ENCODE measurements at regions of chrX and their contacts with region 1.

Region 1: GRCh38 chrX:53714580-53715345 is 28.2 kb upstream of the HUWE1 start:
- DNase-seq: peak; percentile 89
- ATAC-seq: peak; percentile 75
- H3K4me3 ChIP-seq: peak overlapping the region; percentile 60
- H3K27ac ChIP-seq: peak overlapping the region; percentile 84
- H3K4me1 ChIP-seq: peaks cover 19% of the 10 kb centered on the region
- H3K27me3 ChIP-seq: no peaks in the 10 kb centered on the region
- CTCF ChIP-seq: peak; percentile 10 to 17 (median 16); a peak in 2 of 6 replicates
- EP300 ChIP-seq: no peak; a peak in 1 of 4 replicates
- POLR2A ChIP-seq: 0 out of 2 replicates have a peak, but pooled peaks have one; percentile 56
- RAD21 ChIP-seq: no peak

Region 2: GRCh38 chrX:53678667-53679066 is 36.1 kb before region 1 on chrX:
- CTCF ChIA-PET with region 1: interaction called, 13 read pairs
- POLR2A ChIA-PET with region 1: interaction called, 133 read pairs
- RAD21 ChIA-PET with region 1: interaction called, 38 read pairs
- SMC1A ChIA-PET with region 1: interaction called, 75 read pairs
- in situ Hi-C with region 1: no loop called
- intact Hi-C with region 1: no loop called
- DNase-seq: no peak
- ATAC-seq: peak; percentile 28; the same call in 1 of the 3 replicates
- H3K4me3 ChIP-seq: no peak overlapping the region
- H3K27ac ChIP-seq: no peak overlapping the region
- H3K4me1 ChIP-seq: no peaks in the 10 kb centered on the region
- H3K27me3 ChIP-seq: no peaks in the 10 kb centered on the region
- CTCF ChIP-seq: peak; percentile 33 to 41 (median 38); a peak in 5 of 6 replicates
- EP300 ChIP-seq: no peak
- POLR2A ChIP-seq: no peak
- RAD21 ChIP-seq: peak; percentile 36; the same call in 1 of the 2 replicates

Region 3: GRCh38 chrX:53683556-53684414 is 31.0 kb before region 1 on chrX:
- CTCF ChIA-PET with region 1: interaction called, 13 read pairs
- POLR2A ChIA-PET with region 1: interaction called, 133 read pairs
- RAD21 ChIA-PET with region 1: interaction called, 51 read pairs
- SMC1A ChIA-PET with region 1: interaction called, 75 read pairs
- in situ Hi-C with region 1: no loop called
- intact Hi-C with region 1: loop called (anchors 1 kb)
- DNase-seq: peak; percentile 95
- ATAC-seq: peak; percentile 72
- H3K4me3 ChIP-seq: peak overlapping the region; percentile 67
- H3K27ac ChIP-seq: peak overlapping the region; percentile 82
- H3K4me1 ChIP-seq: no peaks in the 10 kb centered on the region
- H3K27me3 ChIP-seq: no peaks in the 10 kb centered on the region
- CTCF ChIP-seq: peak in 1 of 3 experiments; percentile 47; a peak in 1 of 6 replicates
- EP300 ChIP-seq: no peak
- POLR2A ChIP-seq: peak; percentile 81
- RAD21 ChIP-seq: no peak

Region 4: DNA sequence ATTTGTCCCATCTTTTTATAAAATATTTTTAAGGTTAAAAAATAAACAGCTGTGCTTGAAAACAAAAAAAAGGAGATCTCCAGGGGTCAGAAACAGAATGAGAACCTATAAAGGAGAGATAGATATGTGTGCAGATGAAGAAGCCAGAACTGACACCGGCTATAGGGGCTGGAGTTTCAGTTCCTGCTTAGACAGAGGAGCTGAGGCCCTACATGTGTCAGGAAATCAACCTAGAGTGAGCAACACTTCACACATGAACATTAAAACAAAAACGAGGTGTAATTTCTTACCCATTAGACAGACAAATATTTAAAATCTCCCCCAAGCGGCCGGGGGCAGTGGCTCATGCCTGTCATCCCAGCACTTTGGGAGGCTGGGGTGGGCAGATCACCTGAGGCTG is 10.5 kb before region 1 on chrX:
- CTCF ChIA-PET with region 1: interaction called, 41 read pairs
- POLR2A ChIA-PET with region 1: interaction called, 9 read pairs
- RAD21 ChIA-PET with region 1: interaction called, 20 read pairs
- SMC1A ChIA-PET with region 1: interaction called, 63 read pairs
- in situ Hi-C with region 1: no loop called
- intact Hi-C with region 1: no loop called
- DNase-seq: no peak
- ATAC-seq: peak; percentile 99
- H3K4me3 ChIP-seq: no peak overlapping the region
- H3K27ac ChIP-seq: peak overlapping the region; percentile 40
- H3K4me1 ChIP-seq: no peaks in the 10 kb centered on the region; the same call in 1 of the 2 replicates
- H3K27me3 ChIP-seq: no peaks in the 10 kb centered on the region
- CTCF ChIP-seq: no peak
- EP300 ChIP-seq: peak in 1 of 2 experiments; percentile 60; a peak in 1 of 4 replicates
- POLR2A ChIP-seq: no peak
- RAD21 ChIP-seq: no peak

Region 5: GRCh38 chrX:53732797-53733196 is 18.0 kb after region 1 on chrX:
- CTCF ChIA-PET with region 1: interaction called, 5 read pairs
- POLR2A ChIA-PET with region 1: interaction called, 6 read pairs
- RAD21 ChIA-PET with region 1: interaction called, 17 read pairs
- SMC1A ChIA-PET with region 1: interaction called, 14 read pairs
- in situ Hi-C with region 1: no loop called
- intact Hi-C with region 1: loop called (anchors 1 kb)
- DNase-seq: no peak
- ATAC-seq: peak; percentile 89
- H3K4me3 ChIP-seq: no peak overlapping the region
- H3K27ac ChIP-seq: peak overlapping the region; percentile 66
- H3K4me1 ChIP-seq: peaks cover 5% of the 10 kb centered on the region
- H3K27me3 ChIP-seq: no peaks in the 10 kb centered on the region
- CTCF ChIP-seq: no peak
- EP300 ChIP-seq: peak in 1 of 2 experiments; percentile 54; a peak in 1 of 4 replicates
- POLR2A ChIP-seq: no peak
- RAD21 ChIP-seq: no peak

Region 6: DNA sequence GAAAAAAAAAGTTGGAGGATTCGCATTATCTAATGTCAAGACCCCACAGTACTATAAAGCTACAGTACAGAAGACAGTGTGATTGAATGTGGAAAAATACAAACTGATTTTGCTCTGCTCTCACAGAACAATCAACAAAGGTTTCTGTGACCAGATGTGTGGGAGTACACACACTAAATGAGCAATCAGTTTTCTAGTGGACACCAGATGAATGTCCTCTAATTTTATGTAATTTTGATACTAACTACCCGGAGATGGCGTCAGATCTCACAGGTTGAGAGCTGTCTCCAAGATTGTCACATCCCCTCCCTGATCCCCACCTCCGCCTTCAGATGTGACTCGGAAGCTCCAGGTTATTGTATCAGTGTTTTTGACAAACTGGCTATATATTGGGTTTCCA is 53.7 kb after region 1 on chrX:
- CTCF ChIA-PET with region 1: no interaction called
- POLR2A ChIA-PET with region 1: interaction called, 3 read pairs
- RAD21 ChIA-PET with region 1: interaction called, 10 read pairs
- SMC1A ChIA-PET with region 1: interaction called, 7 read pairs
- in situ Hi-C with region 1: no loop called
- intact Hi-C with region 1: loop called (anchors 5 kb)
- DNase-seq: no peak
- ATAC-seq: peak; percentile 80
- H3K4me3 ChIP-seq: no peak overlapping the region
- H3K27ac ChIP-seq: no peak overlapping the region
- H3K4me1 ChIP-seq: no peaks in the 10 kb centered on the region
- H3K27me3 ChIP-seq: no peaks in the 10 kb centered on the region
- CTCF ChIP-seq: no peak
- EP300 ChIP-seq: no peak
- POLR2A ChIP-seq: no peak
- RAD21 ChIP-seq: no peak

Region 7: DNA sequence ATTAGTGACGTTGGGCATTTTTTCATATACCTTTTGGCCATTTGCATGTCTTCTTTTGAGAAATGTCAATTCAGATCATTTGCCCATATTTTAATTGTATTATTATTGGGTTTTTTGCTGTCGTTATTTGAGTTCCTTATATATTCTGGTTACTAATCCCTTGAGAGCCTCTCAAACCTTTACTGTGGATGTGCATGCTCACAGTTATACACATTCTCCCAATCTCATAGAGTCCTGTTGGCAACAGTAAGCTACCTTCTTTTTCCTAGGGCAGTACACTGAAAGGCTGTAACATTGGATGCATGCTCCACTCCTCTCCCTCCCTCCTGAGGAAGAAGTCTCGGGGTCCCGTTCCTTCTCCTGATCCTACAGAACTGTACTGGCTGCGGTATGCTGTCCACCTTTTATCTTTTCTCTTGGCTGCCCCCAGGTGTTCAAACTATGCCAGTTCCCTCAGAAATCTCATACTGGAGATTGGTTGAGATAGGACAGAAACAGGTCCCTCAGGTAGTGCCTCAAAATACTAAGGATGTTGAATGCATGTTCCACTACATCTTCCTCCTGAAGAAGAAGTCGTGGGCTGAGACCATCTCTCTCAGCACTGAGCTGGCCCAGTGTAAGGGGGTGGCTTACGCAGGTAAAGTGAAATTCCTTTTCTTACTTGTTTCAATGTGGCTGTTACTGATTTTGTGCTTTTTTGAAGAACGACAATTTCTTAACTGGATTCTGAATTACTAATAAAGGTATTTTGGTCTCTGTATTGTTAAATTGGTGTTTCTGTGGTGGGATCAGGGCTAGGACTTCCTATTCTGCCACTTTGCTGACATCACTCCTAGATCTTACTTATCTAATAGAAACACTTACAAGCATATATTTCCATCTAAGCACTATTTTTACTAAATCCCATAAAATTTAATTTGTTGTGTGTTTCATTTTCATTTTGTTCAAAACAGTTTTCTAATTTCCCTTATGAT is 117.2 kb after region 1 on chrX:
- CTCF ChIA-PET with region 1: interaction called, 3 read pairs
- POLR2A ChIA-PET with region 1: interaction called, 4 read pairs
- RAD21 ChIA-PET with region 1: no interaction called
- SMC1A ChIA-PET with region 1: interaction called, 15 read pairs
- in situ Hi-C with region 1: no loop called
- intact Hi-C with region 1: loop called (anchors 1 kb)
- DNase-seq: peak; percentile 40
- ATAC-seq: peak; percentile 98
- H3K4me3 ChIP-seq: no peak overlapping the region
- H3K27ac ChIP-seq: no peak overlapping the region
- H3K4me1 ChIP-seq: no peaks in the 10 kb centered on the region
- H3K27me3 ChIP-seq: no peaks in the 10 kb centered on the region
- CTCF ChIP-seq: peak; percentile 59 to 66 (median 62)
- EP300 ChIP-seq: no peak
- POLR2A ChIP-seq: no peak
- RAD21 ChIP-seq: peak; percentile 70

Region 8: GRCh38 chrX:53950130-53950733 is 235.5 kb after region 1 on chrX:
- CTCF ChIA-PET with region 1: no interaction called
- POLR2A ChIA-PET with region 1: no interaction called
- RAD21 ChIA-PET with region 1: no interaction called
- SMC1A ChIA-PET with region 1: no interaction called
- in situ Hi-C with region 1: no loop called
- intact Hi-C with region 1: no loop called
- DNase-seq: no peak
- ATAC-seq: no peak
- H3K4me3 ChIP-seq: no peak overlapping the region
- H3K27ac ChIP-seq: no peak overlapping the region
- H3K4me1 ChIP-seq: no peaks in the 10 kb centered on the region
- H3K27me3 ChIP-seq: no peaks in the 10 kb centered on the region
- CTCF ChIP-seq: no peak
- EP300 ChIP-seq: no peak
- POLR2A ChIP-seq: no peak
- RAD21 ChIP-seq: no peak